ENCODE measurements at regions of chr4 and their contacts with region 1.

Region 1: GRCh38 chr4:81351654-81352445 is 119.9 kb downstream of the RASGEF1B start:
- DNase-seq: peak; percentile 73
- ATAC-seq: peak; percentile 60
- H3K4me3 ChIP-seq: no peak overlapping the region
- H3K4me3 Mint-ChIP-seq: no peak overlapping the region
- H3K27ac ChIP-seq: no peak overlapping the region
- H3K27ac Mint-ChIP-seq: no peak overlapping the region
- H3K4me1 ChIP-seq: no peaks in the 10 kb centered on the region
- H3K4me1 Mint-ChIP-seq: no peaks in the 10 kb centered on the region
- H3K27me3 ChIP-seq: no peaks in the 10 kb centered on the region
- H3K27me3 Mint-ChIP-seq: peaks cover 14% of the 10 kb centered on the region
- CTCF ChIP-seq: peak; percentile 93

Region 2: DNA sequence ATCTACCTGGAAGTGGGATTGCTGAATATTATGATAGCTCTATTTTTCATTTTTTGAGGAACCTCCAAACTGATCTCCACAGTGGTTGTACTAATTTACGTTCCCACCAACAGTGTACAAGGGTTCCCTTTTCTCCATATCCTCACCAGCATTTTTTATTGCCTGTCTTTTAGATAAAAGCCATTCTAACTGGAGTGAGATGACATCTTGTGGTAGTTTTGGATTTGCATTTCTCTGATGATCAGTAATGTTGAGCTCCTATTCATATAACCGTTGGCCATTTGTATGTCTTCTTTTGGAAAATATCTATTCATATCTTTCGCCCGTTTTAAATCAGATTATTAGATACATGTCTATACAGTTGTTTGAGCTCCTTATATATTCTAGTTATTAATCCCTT is 18.0 kb after region 1 on chr4:
- CTCF ChIA-PET with region 1: interaction called, 16 read pairs
- POLR2A ChIA-PET with region 1: no interaction called
- intact Hi-C with region 1: no loop called
- DNase-seq: no peak
- ATAC-seq: no peak
- H3K4me3 ChIP-seq: no peak overlapping the region
- H3K4me3 Mint-ChIP-seq: no peak overlapping the region
- H3K27ac ChIP-seq: no peak overlapping the region
- H3K27ac Mint-ChIP-seq: no peak overlapping the region
- H3K4me1 ChIP-seq: no peaks in the 10 kb centered on the region
- H3K4me1 Mint-ChIP-seq: no peaks in the 10 kb centered on the region
- H3K27me3 ChIP-seq: peaks cover 0 to 3% (median under 1%) of the 10 kb centered on the region in 4 experiments
- H3K27me3 Mint-ChIP-seq: peaks cover 27% of the 10 kb centered on the region
- CTCF ChIP-seq: no peak